ENCODE measurements at regions of chr17 and their contacts with region 1.

Region 1: GRCh38 chr17:45307290-45308015 is 9.4 kb downstream of the MAP3K14 start:
- DNase-seq: peak; percentile 88
- H3K4me3 Mint-ChIP-seq: peak overlapping the region; percentile 69
- H3K27ac Mint-ChIP-seq: peak overlapping the region; percentile 96
- H3K4me1 Mint-ChIP-seq: peaks cover 74% of the 10 kb centered on the region
- H3K27me3 Mint-ChIP-seq: no peaks in the 10 kb centered on the region

Region 2: GRCh38 chr17:45060797-45061605 is 246.5 kb before region 1 on chr17 and contains the start of gene NMT1:
- intact Hi-C with region 1: loop called (anchors 5 kb)
- DNase-seq: peak; percentile 99
- H3K4me3 Mint-ChIP-seq: peak within 1 kb of the TSS; percentile 91
- H3K27ac Mint-ChIP-seq: peak within 1 kb of the TSS; percentile 100
- H3K4me1 Mint-ChIP-seq: peaks cover 29% of the 10 kb centered on the region
- H3K27me3 Mint-ChIP-seq: no peaks in the 10 kb centered on the region
- total RNA-seq, gene NMT1: 176 and 182 TPM in 2 replicates

Region 3: DNA sequence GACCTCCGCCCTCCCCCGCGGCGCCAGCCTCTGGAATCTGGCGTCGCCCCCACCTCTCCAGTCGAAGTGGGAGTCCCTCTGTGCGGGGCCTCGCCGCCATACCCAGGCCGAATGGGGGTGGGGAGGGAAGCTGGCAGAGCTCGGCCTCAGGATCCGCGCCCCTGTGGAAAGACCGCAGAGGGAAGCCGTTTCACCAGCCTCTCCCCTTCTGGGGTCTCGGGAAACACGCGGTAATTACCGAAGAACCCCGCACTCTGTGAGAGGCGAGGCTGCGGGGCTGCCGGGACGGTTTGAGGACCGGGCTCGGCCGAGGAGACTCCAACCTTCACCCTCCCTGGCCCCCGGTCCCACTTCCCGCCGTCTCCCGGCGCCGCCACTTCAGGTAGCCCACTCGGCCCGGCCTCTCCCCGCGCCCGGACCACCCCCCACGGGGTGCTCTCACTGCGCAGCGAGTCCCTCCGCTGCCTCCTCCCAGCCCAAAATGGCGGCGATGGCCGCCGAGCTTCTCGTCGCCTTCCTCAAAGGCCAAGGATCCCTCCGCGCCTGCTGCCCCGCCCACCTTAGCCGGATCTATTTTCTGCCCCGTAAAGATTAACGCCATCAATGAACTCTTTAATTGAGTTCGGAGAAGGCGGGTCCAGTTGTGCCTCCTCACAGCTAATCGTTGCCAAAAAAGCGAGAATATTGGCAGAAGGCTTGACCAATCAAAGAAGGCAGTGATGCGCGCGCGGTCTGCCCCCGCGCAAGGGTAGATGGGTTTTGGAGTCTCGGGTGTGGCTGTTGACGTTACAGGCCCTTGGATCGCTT is 146.2 kb before region 1 on chr17:
- intact Hi-C with region 1: loop called (anchors 2 kb)
- DNase-seq: peak; percentile 100
- H3K4me3 Mint-ChIP-seq: peak overlapping the region; percentile 99
- H3K27ac Mint-ChIP-seq: peak overlapping the region; percentile 98
- H3K4me1 Mint-ChIP-seq: peaks cover 38% of the 10 kb centered on the region
- H3K27me3 Mint-ChIP-seq: no peaks in the 10 kb centered on the region

Region 4: DNA sequence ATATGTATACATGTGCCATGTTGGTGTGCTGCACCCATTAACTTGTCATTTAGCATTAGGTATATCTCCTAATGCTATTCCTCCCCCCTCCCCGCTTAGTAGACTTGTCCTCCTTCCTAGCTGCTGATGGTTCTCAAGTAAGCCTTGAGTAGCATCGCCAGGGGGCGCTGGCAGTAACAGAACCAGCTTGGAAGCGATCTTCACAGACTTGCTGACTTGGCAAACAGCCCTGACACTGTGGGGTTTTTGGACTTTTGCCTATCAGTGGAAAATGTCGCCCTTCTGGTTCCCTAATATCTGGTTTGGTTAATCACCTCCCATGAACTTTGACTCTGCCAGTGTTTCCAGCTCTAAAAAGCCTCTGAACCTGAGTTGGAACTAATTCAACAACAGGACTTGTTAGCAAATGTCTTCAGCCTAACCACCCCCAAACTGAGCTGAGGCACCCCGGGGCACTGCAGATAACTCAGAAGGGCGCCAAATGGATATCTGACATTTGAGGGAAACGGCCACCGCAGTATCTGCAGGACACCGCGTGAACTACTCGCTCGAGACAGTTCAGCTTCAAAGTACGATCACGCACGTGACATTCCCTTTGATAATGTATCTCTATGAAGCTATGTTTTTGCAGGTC is 30.1 kb before region 1 on chr17:
- intact Hi-C with region 1: loop called (anchors 1 kb)
- DNase-seq: peak; percentile 96
- H3K4me3 Mint-ChIP-seq: no peak overlapping the region
- H3K27ac Mint-ChIP-seq: peak overlapping the region; percentile 70
- H3K4me1 Mint-ChIP-seq: peaks cover 14% of the 10 kb centered on the region
- H3K27me3 Mint-ChIP-seq: no peaks in the 10 kb centered on the region

Region 5: DNA sequence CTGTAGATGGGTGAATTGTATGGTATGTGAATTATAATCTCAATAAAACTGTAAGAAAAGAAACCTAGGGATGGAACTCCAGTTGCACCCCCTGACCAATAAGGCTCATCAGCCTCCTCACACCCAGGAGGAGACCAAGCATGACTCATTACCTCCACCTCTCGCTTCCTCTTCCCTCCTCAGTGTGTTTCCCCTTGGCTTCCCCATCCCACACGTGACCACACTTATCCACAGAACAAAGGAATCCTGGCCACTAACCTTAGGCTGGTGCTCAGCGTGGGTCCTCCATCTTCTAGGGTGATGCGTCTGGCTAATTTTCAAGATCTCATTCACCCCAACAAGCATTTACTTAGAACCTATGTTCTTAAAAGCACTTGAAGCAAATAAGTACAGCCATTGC is 45.6 kb after region 1 on chr17:
- intact Hi-C with region 1: loop called (anchors 1 kb)
- DNase-seq: peak; percentile 69
- H3K4me3 Mint-ChIP-seq: peak overlapping the region; percentile 23
- H3K27ac Mint-ChIP-seq: peak overlapping the region; percentile 86
- H3K4me1 Mint-ChIP-seq: peaks cover 36% of the 10 kb centered on the region
- H3K27me3 Mint-ChIP-seq: peaks cover 27% of the 10 kb centered on the region

Region 6: GRCh38 chr17:45371414-45372327 is 64.2 kb after region 1 on chr17:
- intact Hi-C with region 1: no loop called
- DNase-seq: peak; percentile 67
- H3K4me3 Mint-ChIP-seq: peak overlapping the region; percentile 25
- H3K27ac Mint-ChIP-seq: no peak overlapping the region
- H3K4me1 Mint-ChIP-seq: peaks cover 17% of the 10 kb centered on the region
- H3K27me3 Mint-ChIP-seq: peaks cover 14% of the 10 kb centered on the region